ENCODE measurements at regions of chr6 and their contacts with region 1.

Region 1: GRCh38 chr6:26025894-26026832 is 61.1 kb upstream of the HFE start:
- DNase-seq: peak; percentile 86
- ATAC-seq: peak; percentile 35
- H3K4me3 Mint-ChIP-seq: peak overlapping the region; percentile 89
- H3K27ac Mint-ChIP-seq: peak overlapping the region; percentile 99
- H3K4me1 Mint-ChIP-seq: peaks cover 75% of the 10 kb centered on the region
- H3K27me3 Mint-ChIP-seq: no peaks in the 10 kb centered on the region

Region 2: DNA sequence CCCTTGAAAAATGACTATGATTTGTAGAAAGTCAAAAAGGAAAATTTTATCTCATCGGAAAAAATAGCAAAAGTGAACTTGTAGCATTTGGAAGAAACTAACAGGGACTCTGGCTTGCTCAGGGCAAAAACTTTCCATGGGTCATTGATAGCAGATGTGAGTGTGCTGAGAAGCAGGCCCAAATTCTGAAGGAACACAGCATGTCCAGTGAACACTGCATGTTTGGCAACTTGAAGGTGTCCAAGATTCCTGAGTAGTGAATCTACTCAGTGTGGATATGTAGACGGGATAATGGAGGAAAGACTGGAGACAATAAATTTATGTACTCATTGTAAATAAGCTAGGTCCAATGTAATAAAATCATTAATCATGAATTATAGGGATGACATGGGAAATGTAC is 103.9 kb before region 1 on chr6:
- POLR2A ChIA-PET with region 1: no interaction called
- DNase-seq: no peak
- ATAC-seq: no peak
- H3K4me3 Mint-ChIP-seq: no peak overlapping the region
- H3K27ac Mint-ChIP-seq: no peak overlapping the region
- H3K4me1 Mint-ChIP-seq: no peaks in the 10 kb centered on the region
- H3K27me3 Mint-ChIP-seq: no peaks in the 10 kb centered on the region

Region 3: GRCh38 chr6:25992413-25993037 is 33.6 kb before region 1 on chr6:
- POLR2A ChIA-PET with region 1: interaction called, 64 read pairs
- DNase-seq: peak; percentile 99
- ATAC-seq: peak; percentile 96
- H3K4me3 Mint-ChIP-seq: peak overlapping the region; percentile 96
- H3K27ac Mint-ChIP-seq: peak overlapping the region; percentile 96
- H3K4me1 Mint-ChIP-seq: peaks cover 18% of the 10 kb centered on the region
- H3K27me3 Mint-ChIP-seq: no peaks in the 10 kb centered on the region

Region 4: GRCh38 chr6:26103770-26104456 is 77.8 kb after region 1 on chr6:
- POLR2A ChIA-PET with region 1: interaction called, 20 read pairs
- DNase-seq: peak; percentile 86
- ATAC-seq: peak; percentile 89
- H3K4me3 Mint-ChIP-seq: peak overlapping the region; percentile 93
- H3K27ac Mint-ChIP-seq: peak overlapping the region; percentile 100
- H3K4me1 Mint-ChIP-seq: peaks cover 18% of the 10 kb centered on the region
- H3K27me3 Mint-ChIP-seq: no peaks in the 10 kb centered on the region

Region 5: DNA sequence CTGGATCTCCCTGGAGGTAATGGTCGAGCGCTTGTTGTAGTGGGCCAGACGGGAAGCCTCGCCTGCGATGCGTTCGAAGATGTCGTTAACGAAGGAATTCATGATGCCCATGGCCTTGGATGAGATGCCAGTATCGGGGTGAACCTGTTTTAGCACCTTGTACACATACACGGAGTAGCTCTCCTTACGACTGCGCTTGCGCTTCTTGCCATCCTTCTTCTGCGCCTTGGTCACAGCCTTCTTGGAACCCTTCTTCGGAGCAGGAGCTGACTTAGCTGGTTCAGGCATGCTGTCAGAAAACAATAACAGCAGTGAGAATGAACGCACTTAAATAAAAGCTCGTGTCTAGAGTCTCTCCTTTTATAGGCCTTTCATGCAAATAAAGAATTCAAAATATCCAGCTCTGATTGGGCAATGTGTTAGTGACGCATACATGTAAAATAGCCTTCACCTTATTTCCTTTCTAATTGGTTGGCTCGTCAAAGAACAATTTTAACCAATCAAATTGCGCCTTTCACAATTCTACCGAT is 190.3 kb after region 1 on chr6:
- POLR2A ChIA-PET with region 1: interaction called, 41 read pairs
- DNase-seq: peak; percentile 77
- ATAC-seq: peak; percentile 75
- H3K4me3 Mint-ChIP-seq: no peak overlapping the region
- H3K27ac Mint-ChIP-seq: no peak overlapping the region
- H3K4me1 Mint-ChIP-seq: peaks cover 32% of the 10 kb centered on the region
- H3K27me3 Mint-ChIP-seq: no peaks in the 10 kb centered on the region

Region 6: GRCh38 chr6:27132532-27133280 is 1106.5 kb after region 1 on chr6:
- POLR2A ChIA-PET with region 1: interaction called, 26 read pairs
- DNase-seq: peak; percentile 90
- ATAC-seq: peak; percentile 76
- H3K4me3 Mint-ChIP-seq: no peak overlapping the region
- H3K27ac Mint-ChIP-seq: no peak overlapping the region
- H3K4me1 Mint-ChIP-seq: peaks cover 46% of the 10 kb centered on the region
- H3K27me3 Mint-ChIP-seq: no peaks in the 10 kb centered on the region

Region 7: DNA sequence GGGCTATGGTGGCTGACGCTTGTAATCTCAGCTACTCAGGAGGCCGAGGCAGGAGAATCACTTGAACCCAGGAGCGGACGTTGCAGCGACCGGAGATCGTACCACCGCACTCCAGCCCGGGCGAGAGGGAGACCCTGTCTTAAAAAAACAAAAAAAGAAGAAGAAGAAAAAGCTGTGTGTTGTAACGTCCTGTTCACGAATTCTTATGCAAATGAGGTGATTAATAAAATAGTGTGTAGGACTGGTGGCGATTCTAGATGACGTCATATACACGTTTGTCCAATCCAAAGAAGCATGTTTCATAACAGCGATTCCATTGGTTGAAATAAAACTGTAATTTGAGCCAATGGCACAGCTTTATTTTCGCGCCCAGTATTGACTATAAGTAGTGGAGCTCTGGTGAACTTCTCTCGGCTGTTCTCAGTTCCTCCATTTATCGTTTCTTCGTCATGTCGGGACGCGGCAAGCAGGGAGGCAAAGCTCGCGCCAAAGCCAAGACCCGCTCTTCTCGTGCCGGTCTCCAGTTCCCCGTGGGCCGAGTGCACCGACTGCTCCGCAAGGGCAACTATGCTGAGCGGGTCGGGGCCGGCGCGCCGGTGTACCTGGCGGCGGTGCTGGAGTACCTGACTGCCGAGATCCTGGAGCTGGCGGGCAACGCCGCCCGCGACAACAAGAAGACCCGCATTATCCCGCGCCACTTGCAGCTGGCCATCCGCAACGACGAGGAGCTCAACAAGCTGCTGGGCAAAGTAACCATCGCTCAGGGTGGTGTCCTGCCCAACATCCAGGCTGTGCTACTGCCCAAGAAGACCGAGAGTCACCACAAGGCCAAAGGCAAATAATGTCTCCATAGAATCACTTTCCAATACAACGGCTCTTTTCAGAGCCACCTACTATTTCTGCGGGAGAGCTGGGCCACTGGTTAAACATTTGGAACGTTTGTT is 1839.0 kb after region 1 on chr6:
- POLR2A ChIA-PET with region 1: interaction called, 113 read pairs
- DNase-seq: peak; percentile 83
- ATAC-seq: peak; percentile 56
- H3K4me3 Mint-ChIP-seq: peak overlapping the region; percentile 99
- H3K27ac Mint-ChIP-seq: peak overlapping the region; percentile 100
- H3K4me1 Mint-ChIP-seq: peaks cover 57% of the 10 kb centered on the region
- H3K27me3 Mint-ChIP-seq: no peaks in the 10 kb centered on the region

Measured in activated naive CD8-positive, alpha-beta T cell treated with anti-CD3 and anti-CD28 coated beads, Interleukin-2, amount 10 ng/mL, durations not matched to agents 7 days and 5 days (primary cell).